ENCODE measurements at regions of chr2 and their contacts with region 1.

Region 1: DNA sequence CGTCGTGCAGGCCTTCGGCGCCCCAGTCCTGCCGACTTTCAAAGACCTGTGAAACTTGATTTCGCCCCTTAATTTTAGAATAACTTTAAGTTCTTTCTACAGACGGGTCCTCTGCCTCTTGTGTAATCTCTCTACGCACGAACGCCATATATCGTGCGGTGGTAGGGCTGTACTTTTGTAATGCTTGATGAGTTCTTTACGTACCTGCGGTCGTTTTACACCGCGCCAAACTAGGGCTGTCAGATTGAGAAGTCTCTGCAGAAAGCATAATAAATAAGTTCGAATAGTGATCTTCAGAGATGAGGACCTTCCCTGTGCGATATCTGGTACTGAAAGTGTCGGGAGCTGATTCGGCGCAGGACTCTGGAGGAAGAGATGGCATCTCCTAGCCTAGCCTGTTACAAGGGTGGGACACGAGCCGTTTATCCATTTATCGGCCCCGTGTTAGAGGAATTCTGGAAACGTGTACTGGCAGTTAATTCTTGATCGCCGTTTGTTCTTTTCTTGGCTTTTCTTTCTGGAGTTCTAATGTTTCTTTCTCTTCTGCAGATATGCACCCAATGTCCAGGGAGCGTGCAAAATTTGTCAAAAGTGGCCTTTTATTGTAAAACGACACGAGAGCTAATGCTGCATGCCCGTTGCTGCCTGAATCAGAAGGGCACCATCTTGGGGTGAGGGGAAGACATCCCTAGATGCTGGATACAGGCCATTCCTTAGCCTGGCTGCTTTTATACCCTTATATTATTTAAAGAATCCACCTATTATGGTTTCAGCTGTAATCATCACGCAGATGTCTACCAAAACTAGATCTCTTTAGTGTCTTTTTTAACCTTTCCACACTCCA is 782 bp upstream of the SLC5A6 start:
- DNase-seq: no peak
- H3K4me3 ChIP-seq: peak overlapping the region; percentile 87
- H3K27me3 ChIP-seq: no peaks in the 10 kb centered on the region
- CTCF ChIP-seq: no peak

Region 2: GRCh38 chr2:26043862-26044696 is 1168.8 kb before region 1 on chr2:
- CTCF ChIA-PET with region 1: no interaction called
- POLR2A ChIA-PET with region 1: interaction called, 10 read pairs
- DNase-seq: no peak
- H3K4me3 ChIP-seq: no peak overlapping the region
- H3K27me3 ChIP-seq: no peaks in the 10 kb centered on the region
- CTCF ChIP-seq: no peak

Region 3: DNA sequence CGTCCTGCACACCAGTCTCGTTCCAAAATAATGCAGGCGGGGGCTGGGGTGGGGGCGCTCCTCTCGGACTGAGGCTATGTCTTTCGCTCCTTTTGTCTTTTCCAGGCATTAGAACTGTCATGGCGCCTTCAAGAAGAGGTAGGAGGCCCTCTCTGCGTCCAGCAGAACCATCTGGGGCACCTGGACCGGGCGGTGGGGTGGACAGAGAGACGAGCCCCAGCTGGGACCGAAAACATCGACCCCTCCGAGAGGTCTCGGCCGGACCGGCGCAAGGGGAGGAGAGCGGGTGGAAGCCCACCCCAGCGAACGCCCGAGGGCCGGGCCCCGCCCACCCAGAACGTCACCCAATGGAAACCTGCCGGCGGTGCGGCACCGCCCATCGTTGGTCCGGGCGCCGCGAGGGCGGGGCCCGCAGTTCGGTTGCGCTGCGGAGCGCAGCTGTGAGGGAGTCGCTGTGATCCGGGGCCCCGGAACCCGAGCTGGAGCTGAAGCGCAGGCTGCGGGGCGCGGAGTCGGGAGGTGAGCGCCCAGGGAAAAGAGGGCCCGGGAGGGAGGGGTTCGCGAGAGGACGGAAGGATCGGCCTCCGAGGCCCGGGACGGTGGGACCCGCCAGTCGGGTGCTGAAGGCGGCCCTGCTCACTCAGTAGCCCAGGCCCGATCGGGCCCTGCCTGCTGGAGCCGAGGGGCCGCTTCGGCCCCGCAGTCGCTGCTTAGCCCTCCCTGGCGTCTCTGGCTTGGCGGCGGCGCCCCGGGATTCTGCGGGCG is 215.5 kb after region 1 on chr2 and contains the start of gene NRBP1:
- CTCF ChIA-PET with region 1: no interaction called
- POLR2A ChIA-PET with region 1: no interaction called
- DNase-seq: no peak
- H3K4me3 ChIP-seq: peak within 1 kb of the TSS; percentile 97
- H3K27me3 ChIP-seq: no peaks in the 10 kb centered on the region
- CTCF ChIP-seq: peak; percentile 19; the same call in 1 of the 2 replicates
- polyA plus RNA-seq, gene NRBP1: 234 and 270 TPM in 2 replicates

Region 4: GRCh38 chr2:27471961-27472360 is 259.1 kb after region 1 on chr2:
- CTCF ChIA-PET with region 1: no interaction called
- POLR2A ChIA-PET with region 1: no interaction called
- DNase-seq: no peak
- H3K4me3 ChIP-seq: no peak overlapping the region
- H3K27me3 ChIP-seq: no peaks in the 10 kb centered on the region
- CTCF ChIP-seq: no peak

Measured in BJ (cell line).